HepG2 (cell line): ENCODE measurements at regions of chr19 and their contacts with region 1.

Region 1: GRCh38 chr19:55258828-55259539 is at the start of gene PPP6R1:
- DNase-seq: peak; percentile 97
- ATAC-seq: peak; percentile 86
- H3K4me3 ChIP-seq: peak within 1 kb of the TSS; percentile 88 to 95 (median 94)
- H3K27ac ChIP-seq: peak within 1 kb of the TSS; percentile 86
- H3K4me1 ChIP-seq: peaks cover 44% of the 10 kb centered on the region
- H3K27me3 ChIP-seq: no peaks in the 10 kb centered on the region; a peak in 1 of 5 replicates
- CTCF ChIP-seq: 0 out of 2 replicates have a peak, but pooled peaks have one; percentile 8
- EP300 ChIP-seq: peak; percentile 58 to 89; a peak in 3 of 4 replicates
- POLR2A ChIP-seq: peak; percentile 79 to 86
- RAD21 ChIP-seq: peak; percentile 69
- total RNA-seq, gene PPP6R1: 23.0 and 25.8 TPM in 2 replicates

Region 2: DNA sequence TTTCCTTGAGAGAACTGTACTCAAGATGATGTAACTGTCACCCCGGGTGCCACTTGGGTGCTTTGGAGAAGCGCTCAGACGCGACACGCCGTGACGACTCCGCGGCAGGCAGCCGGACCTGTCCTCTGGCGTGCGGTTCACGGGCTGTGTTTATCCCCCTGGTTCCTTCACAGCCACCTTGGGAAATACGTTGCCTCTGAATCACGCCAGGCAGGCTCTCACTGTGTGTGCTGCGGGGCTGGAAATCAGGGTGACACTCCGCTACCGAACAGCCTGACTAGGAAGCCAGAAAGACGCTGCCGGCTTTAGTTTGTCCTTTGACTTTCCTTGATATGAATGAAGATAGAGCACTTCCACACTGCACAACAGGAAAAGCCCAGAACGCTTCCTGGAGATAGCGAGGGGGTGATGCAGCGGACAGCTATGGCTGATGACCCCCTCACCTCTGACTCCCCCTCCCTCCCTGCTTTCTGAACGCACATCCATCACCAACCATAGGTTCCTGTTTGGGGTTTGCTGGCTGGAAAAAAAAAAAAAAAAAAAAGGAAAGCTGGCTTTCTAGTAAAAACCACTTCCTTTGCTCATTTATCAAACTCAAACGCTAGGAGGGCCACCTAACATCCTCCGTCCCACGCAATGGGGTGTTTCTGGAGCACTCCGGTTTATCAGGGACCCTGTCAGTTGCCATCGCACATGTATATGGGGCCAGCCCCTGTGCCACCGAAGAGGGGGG is 217.2 kb before region 1 on chr19:
- CTCF ChIA-PET with region 1: no interaction called
- POLR2A ChIA-PET with region 1: no interaction called
- in situ Hi-C with region 1: no loop called
- intact Hi-C with region 1: no loop called
- DNase-seq: no peak
- ATAC-seq: no peak
- H3K4me3 ChIP-seq: no peak overlapping the region
- H3K27ac ChIP-seq: no peak overlapping the region
- H3K4me1 ChIP-seq: no peaks in the 10 kb centered on the region
- H3K27me3 ChIP-seq: no peaks in the 10 kb centered on the region
- CTCF ChIP-seq: no peak
- EP300 ChIP-seq: no peak
- POLR2A ChIP-seq: no peak
- RAD21 ChIP-seq: no peak

Region 3: DNA sequence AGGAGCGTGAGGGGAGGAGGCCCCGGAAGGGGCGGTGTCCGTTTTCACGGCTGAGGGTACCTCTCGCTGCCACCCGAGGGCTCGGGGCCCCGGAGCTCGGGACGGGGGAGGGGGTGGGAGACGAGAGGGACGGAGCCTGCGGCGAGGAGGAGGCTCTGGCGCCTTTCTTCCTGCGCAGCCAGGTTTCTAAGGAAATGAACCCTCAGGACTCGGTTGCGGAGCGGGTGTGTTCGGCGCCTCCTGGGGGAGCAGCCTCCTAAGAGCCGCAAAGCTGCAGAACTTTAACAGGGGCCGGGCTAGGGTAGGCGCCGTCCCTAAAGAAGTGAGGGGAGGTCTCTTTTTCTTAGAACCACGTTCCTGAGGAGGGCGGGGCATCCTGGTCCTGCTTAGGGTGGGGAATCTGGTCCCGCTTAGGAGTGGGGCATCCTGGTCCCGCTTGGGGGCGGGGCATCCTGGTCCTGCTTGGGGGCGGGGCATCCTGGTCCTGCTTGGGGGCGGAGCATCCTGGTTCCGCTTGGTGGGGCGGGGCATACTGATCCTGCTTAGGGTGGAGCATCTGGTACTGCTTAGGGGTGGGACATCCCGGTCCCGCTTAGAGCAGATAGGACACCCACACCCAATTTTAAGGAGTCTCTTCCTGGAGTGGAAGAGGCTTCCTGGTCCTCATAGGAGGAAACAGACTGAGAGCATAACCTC is 85.1 kb before region 1 on chr19:
- CTCF ChIA-PET with region 1: no interaction called
- POLR2A ChIA-PET with region 1: no interaction called
- in situ Hi-C with region 1: no loop called
- intact Hi-C with region 1: no loop called
- DNase-seq: peak; percentile 39
- ATAC-seq: peak; percentile 49
- H3K4me3 ChIP-seq: peak overlapping the region; percentile 51 to 77 (median 64)
- H3K27ac ChIP-seq: no peak overlapping the region
- H3K4me1 ChIP-seq: peaks cover 26% of the 10 kb centered on the region
- H3K27me3 ChIP-seq: peaks cover 3 to 48% of the 10 kb centered on the region in 2 experiments
- CTCF ChIP-seq: 0 out of 2 replicates have a peak, but pooled peaks have one; percentile 14
- EP300 ChIP-seq: no peak
- POLR2A ChIP-seq: no peak
- RAD21 ChIP-seq: no peak

Region 4: GRCh38 chr19:55206664-55207500 is 52.1 kb before region 1 on chr19:
- CTCF ChIA-PET with region 1: no interaction called
- POLR2A ChIA-PET with region 1: interaction called, 43 read pairs
- in situ Hi-C with region 1: no loop called
- intact Hi-C with region 1: no loop called
- DNase-seq: peak; percentile 93
- ATAC-seq: peak; percentile 89
- H3K4me3 ChIP-seq: peak overlapping the region; percentile 73 to 93 (median 82)
- H3K27ac ChIP-seq: peak overlapping the region; percentile 100
- H3K4me1 ChIP-seq: peaks cover 64% of the 10 kb centered on the region
- H3K27me3 ChIP-seq: no peaks in the 10 kb centered on the region; a peak in 1 of 5 replicates
- CTCF ChIP-seq: no peak
- EP300 ChIP-seq: peak in 1 of 2 experiments; percentile 61; a peak in 2 of 4 replicates
- POLR2A ChIP-seq: peak; percentile 71 to 79
- RAD21 ChIP-seq: 0 out of 2 replicates have a peak, but pooled peaks have one; percentile 20

Region 5: GRCh38 chr19:55216461-55217198 is 42.4 kb before region 1 on chr19:
- CTCF ChIA-PET with region 1: no interaction called
- POLR2A ChIA-PET with region 1: interaction called, 95 read pairs
- in situ Hi-C with region 1: loop called (anchors 5 kb)
- intact Hi-C with region 1: loop called (anchors 1 kb)
- DNase-seq: peak; percentile 96
- ATAC-seq: peak; percentile 87
- H3K4me3 ChIP-seq: peak overlapping the region; percentile 69 to 94 (median 89)
- H3K27ac ChIP-seq: peak overlapping the region; percentile 89
- H3K4me1 ChIP-seq: peaks cover 45% of the 10 kb centered on the region
- H3K27me3 ChIP-seq: no peaks in the 10 kb centered on the region
- CTCF ChIP-seq: peak; percentile 1; the same call in 1 of the 2 replicates
- EP300 ChIP-seq: peak in 1 of 2 experiments; percentile 65; a peak in 2 of 4 replicates
- POLR2A ChIP-seq: peak; percentile 50 to 61
- RAD21 ChIP-seq: peak; percentile 26; the same call in 1 of the 2 replicates

Region 6: GRCh38 chr19:55227241-55228014 is 31.6 kb before region 1 on chr19:
- CTCF ChIA-PET with region 1: no interaction called
- POLR2A ChIA-PET with region 1: interaction called, 12 read pairs
- in situ Hi-C with region 1: loop called (anchors 5 kb)
- intact Hi-C with region 1: no loop called
- DNase-seq: no peak
- ATAC-seq: no peak
- H3K4me3 ChIP-seq: peak overlapping the region in 1 of 3 experiments; percentile 67; a peak in 1 of 6 replicates
- H3K27ac ChIP-seq: peak overlapping the region; percentile 76
- H3K4me1 ChIP-seq: peaks cover 67% of the 10 kb centered on the region
- H3K27me3 ChIP-seq: no peaks in the 10 kb centered on the region
- CTCF ChIP-seq: no peak
- EP300 ChIP-seq: no peak
- POLR2A ChIP-seq: peak in 1 of 2 experiments; percentile 12; a peak in 1 of 4 replicates
- RAD21 ChIP-seq: no peak

Region 7: GRCh38 chr19:55279770-55280643 is 21.0 kb after region 1 on chr19 and contains the start of gene HSPBP1:
- CTCF ChIA-PET with region 1: no interaction called
- POLR2A ChIA-PET with region 1: interaction called, 58 read pairs
- in situ Hi-C with region 1: no loop called
- intact Hi-C with region 1: no loop called
- DNase-seq: peak; percentile 92
- ATAC-seq: peak; percentile 90
- H3K4me3 ChIP-seq: peak within 1 kb of the TSS; percentile 86 to 97 (median 93)
- H3K27ac ChIP-seq: peak within 1 kb of the TSS; percentile 68
- H3K4me1 ChIP-seq: peaks cover 24% of the 10 kb centered on the region
- H3K27me3 ChIP-seq: peaks cover 0 to 9% of the 10 kb centered on the region in 2 experiments; a peak in 3 of 5 replicates
- CTCF ChIP-seq: no peak
- EP300 ChIP-seq: no peak
- POLR2A ChIP-seq: peak; percentile 72 to 86
- RAD21 ChIP-seq: peak; percentile 10; the same call in 1 of the 2 replicates
- total RNA-seq, gene HSPBP1: 33.7 and 35.9 TPM in 2 replicates

Region 8: GRCh38 chr19:55339048-55339888 is 80.3 kb after region 1 on chr19 and contains the start of gene KMT5C:
- CTCF ChIA-PET with region 1: no interaction called
- POLR2A ChIA-PET with region 1: interaction called, 13 read pairs
- in situ Hi-C with region 1: no loop called
- intact Hi-C with region 1: no loop called
- DNase-seq: peak; percentile 100
- ATAC-seq: peak; percentile 91
- H3K4me3 ChIP-seq: peak within 1 kb of the TSS; percentile 82 to 99 (median 91)
- H3K27ac ChIP-seq: peak within 1 kb of the TSS; percentile 86
- H3K4me1 ChIP-seq: peaks cover 31% of the 10 kb centered on the region
- H3K27me3 ChIP-seq: no peaks in the 10 kb centered on the region; a peak in 1 of 5 replicates
- CTCF ChIP-seq: peak; percentile 59
- EP300 ChIP-seq: no peak
- POLR2A ChIP-seq: peak in 1 of 2 experiments; percentile 14; a peak in 2 of 4 replicates
- RAD21 ChIP-seq: peak; percentile 19; the same call in 1 of the 2 replicates
- total RNA-seq, gene KMT5C: 2.1 and 5.5 TPM in 2 replicates

Region 9: DNA sequence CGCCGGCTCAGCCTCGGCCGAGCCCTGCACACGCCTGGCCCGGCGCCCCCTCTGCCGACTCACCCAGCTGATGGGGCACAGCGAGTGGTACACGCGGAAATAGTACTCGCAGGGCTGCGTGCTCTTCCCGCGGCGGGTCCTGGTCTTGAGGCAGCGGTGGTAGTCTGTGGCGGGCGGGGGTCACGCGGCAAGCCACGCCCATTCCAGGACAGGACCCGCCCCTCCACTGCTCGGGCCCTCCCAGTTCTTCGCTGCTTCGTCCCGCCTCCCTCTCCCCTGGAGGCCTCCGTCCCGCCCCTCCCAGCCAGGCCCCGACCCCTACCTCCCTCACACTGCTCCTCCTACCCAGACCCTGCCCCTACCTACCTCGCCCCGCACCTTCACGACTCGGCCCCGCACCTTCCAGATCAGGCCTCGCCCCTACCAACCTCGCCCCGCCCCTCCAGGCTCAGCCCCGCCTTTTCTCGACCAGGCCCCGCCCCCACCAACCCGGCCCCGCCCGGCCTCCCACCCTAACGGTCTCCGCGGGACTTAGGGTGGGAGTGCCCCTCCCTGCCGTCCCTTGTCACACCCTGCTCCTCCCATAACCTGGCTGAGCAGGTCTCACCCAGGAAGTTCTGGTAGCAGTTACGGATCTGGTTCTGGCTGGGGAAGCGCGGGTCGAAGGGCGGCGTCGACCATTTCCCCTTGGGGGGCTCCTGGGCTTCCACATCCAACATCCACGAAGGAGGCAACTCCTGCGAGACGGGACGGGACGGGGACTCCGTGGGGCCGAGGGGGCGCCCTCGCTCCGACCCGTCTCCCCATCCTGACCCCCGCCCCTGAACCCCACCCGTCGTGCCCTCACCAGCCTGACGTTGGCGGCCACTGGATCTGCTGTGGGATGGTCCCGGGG is 95.1 kb after region 1 on chr19:
- CTCF ChIA-PET with region 1: no interaction called
- POLR2A ChIA-PET with region 1: no interaction called
- in situ Hi-C with region 1: no loop called
- intact Hi-C with region 1: no loop called
- DNase-seq: no peak
- ATAC-seq: peak; percentile 75
- H3K4me3 ChIP-seq: peak overlapping the region; percentile 30 to 74 (median 65)
- H3K27ac ChIP-seq: no peak overlapping the region
- H3K4me1 ChIP-seq: peaks cover 19% of the 10 kb centered on the region
- H3K27me3 ChIP-seq: peaks cover 10 to 62% of the 10 kb centered on the region in 2 experiments; a peak in 4 of 5 replicates
- CTCF ChIP-seq: no peak
- EP300 ChIP-seq: no peak
- POLR2A ChIP-seq: no peak
- RAD21 ChIP-seq: no peak

Region 10: DNA sequence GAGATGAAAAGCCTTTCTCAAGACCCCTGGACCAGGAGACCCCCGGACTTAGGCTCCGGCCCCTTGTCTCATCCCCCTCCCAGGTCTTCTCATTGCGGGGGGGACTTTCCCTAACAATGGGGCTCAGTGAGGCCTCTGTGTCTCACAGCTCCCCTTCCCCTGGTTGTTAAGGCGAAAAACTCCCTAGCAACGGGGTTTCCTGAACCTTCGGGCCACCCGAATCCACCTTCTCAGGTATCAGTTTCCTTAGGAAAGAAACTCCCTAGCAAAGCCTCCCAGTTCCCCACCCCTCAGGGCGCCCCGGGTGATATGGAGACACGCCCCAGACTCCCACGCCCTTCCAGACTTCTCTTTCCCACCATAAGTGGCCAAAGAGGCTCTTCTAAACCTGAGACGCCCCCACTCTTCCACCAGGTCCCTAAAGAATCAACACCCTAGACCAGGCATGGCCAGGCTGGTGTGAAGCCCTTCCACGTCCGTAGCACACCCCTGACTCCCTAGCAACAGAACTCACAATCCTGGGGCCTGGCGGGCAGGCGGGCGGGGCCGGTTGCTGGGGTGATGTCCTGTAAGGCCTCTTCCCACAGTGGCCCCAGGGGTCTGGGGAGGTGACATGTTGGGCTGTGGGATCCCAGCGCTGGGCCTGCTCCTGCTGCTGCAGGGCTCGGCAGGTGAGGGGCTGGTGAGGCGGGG is 117.4 kb after region 1 on chr19 and contains the start of gene TMEM190:
- CTCF ChIA-PET with region 1: no interaction called
- POLR2A ChIA-PET with region 1: no interaction called
- in situ Hi-C with region 1: no loop called
- intact Hi-C with region 1: no loop called
- DNase-seq: no peak
- ATAC-seq: peak; percentile 32
- H3K4me3 ChIP-seq: peak within 1 kb of the TSS; percentile 2 to 68 (median 35); a peak in 5 of 6 replicates
- H3K27ac ChIP-seq: no peak within 1 kb of the TSS
- H3K4me1 ChIP-seq: peaks cover 73% of the 10 kb centered on the region
- H3K27me3 ChIP-seq: peaks cover 2 to 15% of the 10 kb centered on the region in 2 experiments; a peak in 3 of 5 replicates
- CTCF ChIP-seq: no peak
- EP300 ChIP-seq: no peak
- POLR2A ChIP-seq: no peak
- RAD21 ChIP-seq: no peak
- total RNA-seq, gene TMEM190: 0.35 TPM in 1 of 2 replicates, not detected in the other